ENCODE measurements at regions of chr1 and their contacts with region 1.

Region 1: DNA sequence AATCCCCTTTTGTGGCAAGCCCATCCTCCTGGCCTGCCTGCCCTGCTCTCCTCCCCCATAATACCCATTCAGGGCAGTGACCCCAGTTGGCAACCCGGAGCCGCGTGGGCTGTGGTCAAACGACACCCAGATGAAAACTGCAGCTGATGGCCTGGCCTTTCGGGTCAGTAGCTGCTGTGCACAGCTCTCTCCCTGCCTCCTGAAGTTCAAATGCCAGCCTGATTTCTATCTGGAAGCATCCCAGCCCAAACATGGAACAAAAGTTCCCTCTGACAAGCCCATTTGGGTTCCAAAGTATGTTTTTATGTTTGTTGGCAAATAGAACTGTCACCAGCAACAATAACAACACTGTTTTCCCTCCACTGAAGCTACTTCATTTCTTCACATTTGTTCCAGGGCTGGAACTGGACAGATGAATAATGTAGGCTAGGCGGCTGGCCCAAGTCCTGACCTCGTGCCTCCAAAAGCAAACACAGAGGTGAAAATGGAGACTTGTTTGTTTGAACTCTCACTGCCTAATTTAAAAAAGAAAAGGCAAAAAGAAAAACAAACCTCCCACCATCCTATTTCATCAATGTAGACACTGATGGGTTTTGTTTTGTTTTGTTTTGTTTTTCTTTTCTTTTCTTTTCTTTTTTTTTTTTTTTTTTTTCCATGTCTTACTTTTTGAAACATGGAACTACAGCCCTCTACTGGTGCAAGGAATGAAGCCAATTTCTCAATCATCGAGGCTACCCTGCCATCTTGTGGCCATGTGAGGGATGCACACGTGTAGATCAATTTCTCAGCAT is 179.0 kb downstream of the ADSS2 start:
- DNase-seq: peak; percentile 25 to 58
- ATAC-seq: peak; percentile 72 to 94 (median 78)
- H3K4me3 ChIP-seq: no peak overlapping the region
- H3K27ac ChIP-seq: peak overlapping the region in 5 of 10 donors; percentile 2 to 46 (median 21)
- H3K4me1 ChIP-seq: peaks cover 0 to 19% (median 0%) of the 10 kb centered on the region in 9 donors
- H3K27me3 ChIP-seq: no peaks in the 10 kb centered on the region
- CTCF ChIP-seq: peak; percentile 84 to 98 (median 92)

Region 2: DNA sequence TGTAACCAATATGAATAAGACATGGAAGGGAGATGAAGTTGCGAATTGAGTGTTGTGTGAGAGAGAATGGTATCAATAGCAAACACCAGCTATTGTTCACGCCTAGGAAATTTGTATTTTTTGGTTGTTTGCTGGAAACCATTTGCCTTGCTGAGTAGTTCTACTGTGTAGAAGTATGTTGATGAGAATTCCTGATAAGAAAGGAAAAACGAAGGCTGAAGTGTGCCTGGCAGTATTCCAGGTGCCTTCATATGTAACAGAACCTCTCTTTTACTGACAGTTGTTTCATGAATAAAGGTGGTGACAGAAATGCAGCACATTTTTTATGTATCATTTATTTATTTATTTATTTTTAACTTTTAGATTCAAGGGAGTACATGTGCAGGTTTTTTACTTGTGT is 937.4 kb before region 1 on chr1:
- intact Hi-C with region 1: loop called in 6 of 10 experiments (anchors 5 kb)
- DNase-seq: no peak
- ATAC-seq: no peak
- H3K4me3 ChIP-seq: no peak overlapping the region
- H3K27ac ChIP-seq: no peak overlapping the region
- H3K4me1 ChIP-seq: no peaks in the 10 kb centered on the region
- H3K27me3 ChIP-seq: no peaks in the 10 kb centered on the region
- CTCF ChIP-seq: no peak

Region 3: DNA sequence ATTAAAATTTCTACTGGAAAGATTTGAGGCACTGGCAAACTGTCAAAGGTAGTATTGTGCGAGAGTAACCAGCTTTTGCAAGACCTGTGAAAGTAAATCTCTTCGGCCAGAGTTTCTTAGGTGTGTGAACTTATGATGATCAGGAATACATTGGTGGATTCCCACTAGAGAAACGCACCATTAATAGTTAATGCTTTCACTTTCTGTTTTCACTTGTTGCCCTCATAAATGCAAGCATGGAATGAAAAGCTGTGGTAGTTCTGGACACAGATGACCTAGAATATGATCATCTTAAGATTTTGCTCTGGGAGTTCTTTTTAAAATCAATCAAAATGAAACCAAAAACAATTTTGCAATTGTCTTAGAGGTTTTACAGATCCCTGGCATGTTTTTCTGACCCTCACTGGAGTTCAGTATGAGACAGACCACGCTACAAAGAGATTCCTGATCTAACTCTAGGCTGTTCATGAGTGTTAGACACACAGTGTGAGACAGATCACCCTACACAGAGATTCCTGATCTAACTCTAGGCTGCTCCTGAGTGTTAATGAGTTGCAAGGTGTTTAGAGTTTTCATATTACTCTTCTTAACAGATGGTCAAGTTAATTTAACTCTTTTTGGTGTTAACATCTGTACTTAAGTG is 918.0 kb before region 1 on chr1:
- intact Hi-C with region 1: loop called in 1 of 10 experiments (anchors 5 kb)
- DNase-seq: no peak
- ATAC-seq: peak in 5 of 8 donors; percentile 47 to 76 (median 62)
- H3K4me3 ChIP-seq: peak overlapping the region in 8 of 10 donors; percentile 17 to 46 (median 36)
- H3K27ac ChIP-seq: peak overlapping the region in 5 of 10 donors; percentile 7 to 59 (median 41)
- H3K4me1 ChIP-seq: peaks cover 0 to 16% (median 5%) of the 10 kb centered on the region in 9 donors
- H3K27me3 ChIP-seq: no peaks in the 10 kb centered on the region
- CTCF ChIP-seq: no peak

Region 4: GRCh38 chr1:243708210-243708609 is 564.5 kb before region 1 on chr1:
- intact Hi-C with region 1: loop called in 6 of 10 experiments (anchors 2 to 10 kb)
- DNase-seq: no peak
- ATAC-seq: no peak
- H3K4me3 ChIP-seq: no peak overlapping the region
- H3K27ac ChIP-seq: no peak overlapping the region
- H3K4me1 ChIP-seq: peaks cover 0 to 16% (median 2%) of the 10 kb centered on the region in 9 donors
- H3K27me3 ChIP-seq: no peaks in the 10 kb centered on the region
- CTCF ChIP-seq: peak in 5 of 9 donors; percentile 15 to 56 (median 49)

Region 5: DNA sequence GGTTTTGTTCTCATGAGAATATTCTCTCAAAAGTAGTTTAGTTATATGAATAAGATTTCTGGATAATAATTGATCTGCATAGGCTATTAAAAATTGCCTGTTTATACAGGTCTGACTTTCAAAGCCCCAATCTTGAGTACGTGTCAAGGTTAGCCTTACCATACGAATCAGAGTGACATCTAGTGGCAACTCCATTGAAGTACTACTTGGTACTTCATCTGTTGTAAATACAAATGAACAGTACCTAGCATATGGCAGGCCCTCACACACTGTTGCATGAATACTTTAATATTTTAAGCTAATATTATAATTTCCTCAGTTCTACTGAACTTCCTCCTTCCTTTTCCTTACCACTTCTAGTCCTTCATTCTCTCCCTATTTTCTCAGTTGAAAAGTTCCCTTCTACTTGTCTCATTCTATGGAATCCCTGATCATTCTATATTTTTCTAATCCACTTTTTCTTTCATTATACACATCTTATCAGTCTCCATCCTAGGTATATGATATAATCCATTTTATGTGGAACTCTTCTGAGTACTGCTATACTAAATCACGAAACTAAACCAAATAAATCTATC is 523.9 kb before region 1 on chr1:
- intact Hi-C with region 1: loop called in 1 of 10 experiments (anchors 10 kb)
- DNase-seq: peak in 1 of 2 donors; percentile 34
- ATAC-seq: peak; percentile 64 to 94 (median 90)
- H3K4me3 ChIP-seq: no peak overlapping the region
- H3K27ac ChIP-seq: no peak overlapping the region
- H3K4me1 ChIP-seq: peaks cover 0 to 19% (median 5%) of the 10 kb centered on the region in 9 donors
- H3K27me3 ChIP-seq: no peaks in the 10 kb centered on the region
- CTCF ChIP-seq: peak; percentile 59 to 92 (median 83)

Region 6: DNA sequence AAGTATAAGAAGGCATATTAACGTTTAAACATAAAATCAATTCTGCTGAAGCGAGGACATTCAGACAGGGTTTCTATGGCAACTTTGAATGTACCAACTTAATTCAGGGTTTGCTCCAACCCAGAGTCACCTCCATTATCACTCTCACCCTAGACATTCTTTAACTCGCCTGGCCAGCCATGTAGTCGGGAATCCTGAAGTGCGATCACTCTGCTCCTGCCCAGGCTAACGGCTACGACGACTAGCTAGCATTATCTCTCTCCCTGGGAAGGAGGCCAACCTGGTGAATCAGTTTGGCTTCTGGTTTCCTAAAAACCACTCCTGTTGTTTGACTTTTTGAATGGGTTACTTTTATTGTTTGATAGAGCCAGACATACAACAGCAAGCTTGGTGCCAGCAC is 260.5 kb before region 1 on chr1:
- intact Hi-C with region 1: loop called in 1 of 10 experiments (anchors 10 kb)
- DNase-seq: peak in 1 of 2 donors; percentile 10
- ATAC-seq: peak in 2 of 8 donors; percentile 65 to 68
- H3K4me3 ChIP-seq: peak overlapping the region in 3 of 10 donors; percentile 5 to 13 (median 12)
- H3K27ac ChIP-seq: no peak overlapping the region
- H3K4me1 ChIP-seq: peaks cover 0 to 27% (median 12%) of the 10 kb centered on the region in 9 donors
- H3K27me3 ChIP-seq: peaks cover 0 to 6% (median 0%) of the 10 kb centered on the region in 7 donors
- CTCF ChIP-seq: no peak

Region 7: GRCh38 chr1:244047621-244048471 is 224.8 kb before region 1 on chr1:
- intact Hi-C with region 1: loop called in 5 of 10 experiments (anchors 2 to 10 kb)
- DNase-seq: peak; percentile 99
- ATAC-seq: peak; percentile 95 to 99 (median 98)
- H3K4me3 ChIP-seq: peak overlapping the region; percentile 67 to 99 (median 85)
- H3K27ac ChIP-seq: peak overlapping the region; percentile 89 to 99 (median 98)
- H3K4me1 ChIP-seq: peaks cover 0 to 41% (median 32%) of the 10 kb centered on the region in 9 donors
- H3K27me3 ChIP-seq: no peaks in the 10 kb centered on the region
- CTCF ChIP-seq: peak in 2 of 9 donors; percentile 7 to 12

Region 8: DNA sequence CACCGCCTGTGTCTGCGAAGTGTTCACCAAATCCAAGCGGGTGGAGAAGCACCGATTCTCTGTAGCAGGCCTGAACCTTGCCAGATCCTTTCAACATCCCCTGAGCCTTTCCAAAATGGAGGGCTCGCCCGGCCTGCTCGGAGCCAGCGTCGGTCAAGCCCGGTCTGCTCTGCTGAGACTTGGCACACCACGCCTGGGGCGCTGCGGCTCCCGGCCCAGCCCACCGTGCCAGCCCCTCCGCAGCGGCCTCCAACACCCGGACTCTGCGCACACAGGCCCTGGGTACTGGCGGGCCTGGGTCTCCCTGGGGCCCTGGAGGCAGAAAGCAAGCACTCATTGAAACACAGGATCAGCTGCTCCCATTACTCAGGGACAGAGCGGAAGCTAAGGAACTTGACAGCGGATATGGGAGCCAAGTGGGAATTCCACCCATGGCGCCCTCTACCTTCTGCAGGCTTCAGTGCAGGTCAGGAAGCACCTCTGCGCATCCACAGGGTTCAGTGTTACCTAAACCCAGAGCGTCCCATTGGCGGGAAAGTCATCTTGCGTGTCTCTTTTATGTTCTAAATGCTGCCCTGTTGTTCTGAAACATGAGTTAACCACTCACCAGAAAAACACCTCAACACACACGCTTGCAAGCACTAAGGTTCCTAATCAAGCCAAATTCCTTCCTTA is 61.6 kb before region 1 on chr1:
- intact Hi-C with region 1: no loop called
- DNase-seq: no peak
- ATAC-seq: no peak
- H3K4me3 ChIP-seq: no peak overlapping the region
- H3K27ac ChIP-seq: no peak overlapping the region
- H3K4me1 ChIP-seq: peaks cover 0 to 48% (median 20%) of the 10 kb centered on the region in 9 donors
- H3K27me3 ChIP-seq: no peaks in the 10 kb centered on the region
- CTCF ChIP-seq: peak in 3 of 9 donors; percentile 2 to 33 (median 30)

Region 9: DNA sequence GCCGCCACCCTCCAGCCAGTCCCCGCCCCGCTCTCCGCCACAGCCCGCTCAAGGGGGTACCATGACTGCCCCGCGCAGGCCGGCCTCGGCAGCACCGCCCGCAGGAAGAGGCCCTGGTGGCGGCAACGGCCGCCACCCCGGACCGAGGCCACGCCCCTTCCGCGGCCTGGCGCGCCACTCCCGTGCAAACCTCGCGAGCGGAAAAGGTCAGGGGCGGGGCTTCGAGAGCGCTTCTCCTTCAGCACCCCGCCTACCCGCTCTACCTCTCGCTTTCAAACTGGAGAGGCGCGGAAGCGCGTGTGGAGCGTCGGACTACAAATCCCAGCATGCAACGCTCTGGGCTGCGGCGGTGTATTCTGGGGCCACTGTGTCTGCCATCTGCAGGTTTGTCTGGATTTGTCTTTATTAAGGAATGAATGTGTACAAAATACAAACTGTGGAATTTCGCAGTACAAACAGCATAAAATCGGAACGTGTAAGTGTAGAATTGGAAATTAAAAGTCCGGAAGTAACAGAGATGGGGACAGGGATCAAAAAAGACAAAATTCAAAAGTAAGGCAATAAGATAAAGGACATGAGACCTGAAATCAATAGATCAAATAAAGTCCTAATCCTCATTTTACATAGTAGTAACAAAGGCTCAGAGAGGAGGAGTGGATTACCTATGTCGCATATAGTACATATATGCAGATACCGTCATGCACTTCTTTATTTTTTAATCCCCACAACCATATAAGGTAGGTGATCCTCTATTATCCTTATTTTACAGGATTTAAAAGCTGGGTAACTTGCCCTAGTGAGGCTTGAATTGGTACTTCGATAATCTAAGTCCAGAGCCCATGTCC is 179.5 kb after region 1 on chr1:
- intact Hi-C with region 1: no loop called
- DNase-seq: peak; percentile 99
- ATAC-seq: peak; percentile 97 to 100 (median 98)
- H3K4me3 ChIP-seq: peak overlapping the region in 9 of 10 donors; percentile 75 to 97 (median 85)
- H3K27ac ChIP-seq: peak overlapping the region in 9 of 10 donors; percentile 90 to 97 (median 95)
- H3K4me1 ChIP-seq: peaks cover 4 to 35% (median 16%) of the 10 kb centered on the region in 9 donors
- H3K27me3 ChIP-seq: no peaks in the 10 kb centered on the region
- CTCF ChIP-seq: peak; percentile 26 to 71 (median 50)

Region 10: DNA sequence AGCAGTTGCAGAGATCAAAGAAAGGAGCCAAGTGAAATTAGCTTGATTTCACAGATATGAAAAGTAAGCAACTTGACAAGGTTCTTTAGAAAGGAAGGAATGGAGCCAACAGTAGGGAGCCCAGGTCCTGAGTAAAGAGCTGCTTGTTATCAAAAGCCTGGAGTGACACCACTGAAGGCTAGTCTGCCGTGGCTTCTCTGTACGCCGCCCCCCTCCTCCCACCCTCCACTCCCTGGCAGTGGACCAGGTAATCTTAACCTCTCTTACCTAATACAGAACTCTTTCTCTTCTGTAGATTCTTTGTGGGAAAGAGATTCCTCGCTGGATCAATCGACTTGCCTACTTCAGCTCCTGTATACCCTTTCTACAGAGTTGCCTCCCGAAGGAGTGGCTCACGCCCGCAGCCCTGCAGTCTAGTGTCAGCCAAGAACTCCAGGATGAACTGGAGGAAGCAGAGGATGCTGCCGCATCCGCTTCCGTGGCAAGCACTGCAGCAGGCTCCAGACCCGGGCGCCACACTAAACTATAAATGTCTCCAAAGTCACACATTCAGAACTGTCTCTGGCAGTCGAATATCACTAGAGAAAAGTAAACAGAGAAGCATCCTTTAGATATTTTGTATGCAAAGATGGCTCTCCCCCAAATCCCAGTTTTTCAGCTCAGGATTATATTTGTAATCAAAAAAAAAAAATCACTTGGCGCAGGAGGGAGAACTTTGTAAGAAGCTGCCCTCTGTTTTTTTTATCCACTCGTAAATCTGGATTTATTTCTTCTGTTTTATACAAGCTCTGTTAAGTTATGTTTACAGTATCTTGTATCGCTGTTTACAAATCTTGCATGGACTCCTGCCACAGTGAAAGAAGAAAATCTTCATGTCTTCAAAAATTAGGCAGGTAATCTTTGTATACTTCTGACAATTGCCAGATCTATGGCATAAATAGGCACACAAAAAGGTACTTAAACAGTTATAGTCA is 432.9 kb after region 1 on chr1:
- intact Hi-C with region 1: no loop called
- DNase-seq: no peak
- ATAC-seq: peak in 5 of 8 donors; percentile 39 to 74 (median 63)
- H3K4me3 ChIP-seq: no peak overlapping the region
- H3K27ac ChIP-seq: peak overlapping the region in 3 of 10 donors; percentile 11 to 17 (median 15)
- H3K4me1 ChIP-seq: peaks cover 0 to 20% (median 8%) of the 10 kb centered on the region in 9 donors
- H3K27me3 ChIP-seq: no peaks in the 10 kb centered on the region
- CTCF ChIP-seq: no peak